GM12878 (cell line): ENCODE measurements at regions of chr19 and their contacts with region 1.

Region 1: DNA sequence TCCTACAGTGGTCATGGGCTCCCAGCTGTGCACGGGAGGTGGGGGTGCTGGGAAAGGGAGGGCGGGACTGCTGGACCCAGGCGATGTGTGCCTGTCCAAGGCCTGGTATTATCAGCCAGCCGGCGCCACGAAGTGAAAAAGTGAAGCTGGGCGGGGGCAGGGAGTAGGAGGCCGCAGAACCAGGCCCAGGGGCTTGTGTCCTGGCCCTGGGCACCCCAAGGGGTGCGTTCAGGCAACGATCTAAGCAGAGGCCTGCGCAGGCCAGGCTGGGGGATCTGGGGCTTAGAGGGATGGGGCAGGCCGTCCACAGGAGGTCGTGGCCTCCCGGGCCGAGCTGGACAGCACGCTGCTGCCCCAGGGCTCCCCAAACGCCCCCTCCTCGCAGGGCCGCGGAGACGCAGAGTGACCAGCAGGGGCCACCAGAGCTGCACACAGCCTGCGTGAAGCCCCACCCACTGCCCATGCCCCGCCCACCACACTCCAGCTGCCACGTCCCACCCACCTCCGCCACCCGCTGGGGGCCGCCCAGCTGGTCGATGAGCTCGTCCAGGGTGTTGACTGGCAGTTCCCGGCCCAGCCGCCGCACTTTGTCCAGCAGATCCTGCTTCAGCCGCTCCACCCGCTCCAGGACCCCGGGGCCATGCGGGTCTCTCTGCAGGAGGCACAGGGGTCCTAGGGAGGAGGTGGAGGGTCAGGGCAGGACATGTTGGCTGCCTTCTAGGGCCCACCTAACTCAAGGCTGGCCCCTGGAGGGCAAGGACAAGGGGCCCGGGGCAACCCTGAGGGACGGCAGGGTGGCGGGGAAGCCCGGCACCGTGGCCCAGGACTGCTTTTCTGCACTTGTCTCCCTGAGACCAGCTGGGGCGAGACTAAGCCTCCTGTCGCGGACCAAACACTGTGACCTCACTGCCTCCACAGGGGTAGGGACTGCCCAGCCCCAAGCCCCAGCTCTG is 9.5 kb downstream of the GPX4 start:
- DNase-seq: peak; percentile 24
- ATAC-seq: peak; percentile 93
- H3K4me3 ChIP-seq: no peak overlapping the region
- H3K27ac ChIP-seq: no peak overlapping the region
- H3K4me1 ChIP-seq: 0 out of 2 replicates have a peak, but pooled peaks cover 3% of the 10 kb centered on the region
- H3K27me3 ChIP-seq: no peaks in the 10 kb centered on the region
- CTCF ChIP-seq: peak; percentile 62 to 90 (median 90)
- EP300 ChIP-seq: no peak
- POLR2A ChIP-seq: peak; percentile 61
- RAD21 ChIP-seq: peak; percentile 69

Region 2: DNA sequence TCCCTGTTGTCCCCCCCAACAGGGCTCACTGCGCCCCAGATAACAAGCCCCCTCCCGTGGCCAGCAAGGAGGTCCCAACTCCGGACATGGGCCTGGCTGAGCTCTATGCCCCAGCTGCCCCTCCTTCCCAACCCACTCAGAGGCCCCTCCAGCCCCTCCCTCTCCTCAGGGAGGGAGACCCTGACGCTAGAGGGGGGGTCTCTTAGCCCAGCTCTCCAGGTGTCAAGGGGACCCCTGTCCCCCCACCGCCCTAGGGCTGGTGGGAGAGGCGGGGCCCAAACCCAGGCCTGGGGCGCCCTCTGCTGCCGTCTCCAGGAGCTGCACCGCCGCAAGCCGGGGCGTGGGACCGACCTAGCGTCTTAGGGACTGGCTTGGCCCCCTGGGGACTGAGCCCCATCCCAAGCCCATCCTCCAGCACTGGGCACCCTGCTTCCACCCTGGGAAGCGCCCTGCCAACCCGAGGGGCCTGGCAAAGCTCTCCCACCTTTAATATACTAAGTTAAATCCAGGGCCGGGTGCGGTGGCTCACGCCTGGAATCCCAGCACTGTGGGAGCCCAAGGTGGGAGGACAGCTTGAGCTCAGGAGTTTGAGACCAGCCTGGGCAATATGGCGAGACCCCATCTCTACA is 111.7 kb before region 1 on chr19:
- CTCF ChIA-PET with region 1: no interaction called
- POLR2A ChIA-PET with region 1: no interaction called
- RAD21 ChIA-PET with region 1: no interaction called
- SMC1A ChIA-PET with region 1: no interaction called
- in situ Hi-C with region 1: no loop called
- intact Hi-C with region 1: no loop called
- DNase-seq: no peak
- ATAC-seq: peak; percentile 92
- H3K4me3 ChIP-seq: no peak overlapping the region
- H3K27ac ChIP-seq: no peak overlapping the region
- H3K4me1 ChIP-seq: no peaks in the 10 kb centered on the region
- H3K27me3 ChIP-seq: peaks cover 3 to 5% of the 10 kb centered on the region in 2 experiments; a peak in 3 of 4 replicates
- CTCF ChIP-seq: peak; percentile 86 to 95 (median 95)
- EP300 ChIP-seq: no peak
- POLR2A ChIP-seq: no peak
- RAD21 ChIP-seq: peak; percentile 66

Region 3: GRCh38 chr19:1131738-1132551 is 18.6 kb after region 1 on chr19:
- CTCF ChIA-PET with region 1: interaction called, 9 read pairs
- POLR2A ChIA-PET with region 1: interaction called, 8 read pairs
- RAD21 ChIA-PET with region 1: interaction called, 11 read pairs
- SMC1A ChIA-PET with region 1: interaction called, 7 read pairs
- in situ Hi-C with region 1: no loop called
- intact Hi-C with region 1: no loop called
- DNase-seq: peak; percentile 21
- ATAC-seq: peak; percentile 76
- H3K4me3 ChIP-seq: peak overlapping the region; percentile 91
- H3K27ac ChIP-seq: peak overlapping the region; percentile 86
- H3K4me1 ChIP-seq: peaks cover 34% of the 10 kb centered on the region
- H3K27me3 ChIP-seq: no peaks in the 10 kb centered on the region
- CTCF ChIP-seq: no peak
- EP300 ChIP-seq: no peak; a peak in 1 of 4 replicates
- POLR2A ChIP-seq: peak; percentile 80
- RAD21 ChIP-seq: no peak

Region 4: DNA sequence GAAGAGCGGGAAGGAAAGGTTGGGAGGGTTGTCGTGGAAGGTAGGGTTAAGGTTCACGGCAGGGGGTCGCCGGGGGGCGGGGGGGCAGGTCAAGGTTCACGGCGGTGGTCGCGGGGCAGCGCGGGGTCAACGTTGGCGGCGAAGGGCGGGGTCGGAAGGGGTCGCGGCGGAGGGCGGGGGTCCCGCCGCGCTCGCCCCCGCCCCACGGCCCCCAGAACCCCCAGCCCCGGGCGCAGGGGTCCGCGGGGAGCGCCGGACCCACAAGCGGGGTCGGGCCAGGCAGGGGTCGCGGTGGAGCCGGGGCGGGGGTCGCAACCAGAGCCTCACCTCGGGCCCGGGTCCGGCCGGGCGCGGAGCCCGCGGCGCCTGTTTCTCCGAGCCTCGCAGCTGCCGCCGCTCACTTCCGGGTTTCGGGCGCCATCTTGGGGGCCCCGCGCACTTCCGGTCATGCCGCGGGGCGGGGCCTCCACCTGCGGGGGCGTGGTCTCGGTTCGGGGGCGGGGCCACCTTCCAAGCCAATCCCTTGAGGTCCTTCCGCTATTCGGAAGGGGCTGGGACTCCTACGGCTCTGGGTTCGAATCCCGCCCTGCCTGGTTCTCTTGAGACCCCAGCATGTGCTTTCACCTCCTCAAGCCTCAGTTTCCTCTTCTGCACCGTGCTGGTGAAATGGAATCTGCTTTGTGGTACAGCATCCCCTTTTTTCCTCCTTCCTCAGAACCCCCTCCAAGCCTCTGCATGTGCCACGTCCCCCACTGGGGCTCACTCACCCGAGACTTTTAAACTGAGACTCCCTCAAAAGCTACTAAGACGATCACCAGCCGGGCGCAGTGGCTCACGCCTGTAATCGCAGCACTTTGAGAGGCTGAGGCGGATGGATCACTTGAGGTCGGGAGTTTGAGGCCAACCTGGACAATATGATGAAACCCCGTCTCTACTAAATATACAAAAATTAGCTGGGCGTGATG is 60.8 kb after region 1 on chr19 and contains the start of gene SBNO2:
- CTCF ChIA-PET with region 1: interaction called, 13 read pairs
- POLR2A ChIA-PET with region 1: interaction called, 4 read pairs
- RAD21 ChIA-PET with region 1: interaction called, 9 read pairs
- SMC1A ChIA-PET with region 1: no interaction called
- in situ Hi-C with region 1: no loop called
- intact Hi-C with region 1: no loop called
- DNase-seq: no peak
- ATAC-seq: peak; percentile 82
- H3K4me3 ChIP-seq: peak within 1 kb of the TSS; percentile 95
- H3K27ac ChIP-seq: peak within 1 kb of the TSS; percentile 83
- H3K4me1 ChIP-seq: peaks cover 16% of the 10 kb centered on the region
- H3K27me3 ChIP-seq: no peaks in the 10 kb centered on the region
- CTCF ChIP-seq: no peak
- EP300 ChIP-seq: no peak
- POLR2A ChIP-seq: peak; percentile 92
- RAD21 ChIP-seq: no peak
- polyA plus RNA-seq, gene SBNO2: 0.08 to 0.15 TPM

Region 5: DNA sequence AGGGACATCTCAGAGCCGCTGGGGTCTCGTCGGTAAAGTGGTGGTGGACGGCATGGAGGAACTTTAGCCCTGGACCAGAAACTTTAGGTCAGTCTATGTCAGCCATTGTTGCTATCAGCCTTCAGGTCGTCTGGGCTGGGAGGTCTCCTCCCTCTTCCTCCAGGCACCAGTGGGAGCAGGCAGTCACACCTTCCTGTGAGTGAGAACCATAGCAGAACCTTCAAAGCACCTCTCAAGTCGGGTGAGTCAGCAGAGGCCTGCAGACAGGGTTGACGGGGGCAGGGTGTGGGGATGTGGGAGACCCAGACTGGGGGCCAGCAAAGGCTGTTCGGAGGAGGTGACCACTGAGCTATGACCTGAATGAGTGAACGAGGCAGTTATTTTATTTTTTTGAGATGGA is 76.1 kb after region 1 on chr19:
- CTCF ChIA-PET with region 1: interaction called, 49 read pairs
- POLR2A ChIA-PET with region 1: interaction called, 3 read pairs
- RAD21 ChIA-PET with region 1: interaction called, 38 read pairs
- SMC1A ChIA-PET with region 1: interaction called, 24 read pairs
- in situ Hi-C with region 1: no loop called
- intact Hi-C with region 1: loop called (anchors 5 kb)
- DNase-seq: no peak
- ATAC-seq: peak; percentile 59
- H3K4me3 ChIP-seq: no peak overlapping the region
- H3K27ac ChIP-seq: no peak overlapping the region
- H3K4me1 ChIP-seq: peaks cover 17% of the 10 kb centered on the region
- H3K27me3 ChIP-seq: no peaks in the 10 kb centered on the region
- CTCF ChIP-seq: no peak
- EP300 ChIP-seq: no peak
- POLR2A ChIP-seq: no peak
- RAD21 ChIP-seq: no peak

Region 6: DNA sequence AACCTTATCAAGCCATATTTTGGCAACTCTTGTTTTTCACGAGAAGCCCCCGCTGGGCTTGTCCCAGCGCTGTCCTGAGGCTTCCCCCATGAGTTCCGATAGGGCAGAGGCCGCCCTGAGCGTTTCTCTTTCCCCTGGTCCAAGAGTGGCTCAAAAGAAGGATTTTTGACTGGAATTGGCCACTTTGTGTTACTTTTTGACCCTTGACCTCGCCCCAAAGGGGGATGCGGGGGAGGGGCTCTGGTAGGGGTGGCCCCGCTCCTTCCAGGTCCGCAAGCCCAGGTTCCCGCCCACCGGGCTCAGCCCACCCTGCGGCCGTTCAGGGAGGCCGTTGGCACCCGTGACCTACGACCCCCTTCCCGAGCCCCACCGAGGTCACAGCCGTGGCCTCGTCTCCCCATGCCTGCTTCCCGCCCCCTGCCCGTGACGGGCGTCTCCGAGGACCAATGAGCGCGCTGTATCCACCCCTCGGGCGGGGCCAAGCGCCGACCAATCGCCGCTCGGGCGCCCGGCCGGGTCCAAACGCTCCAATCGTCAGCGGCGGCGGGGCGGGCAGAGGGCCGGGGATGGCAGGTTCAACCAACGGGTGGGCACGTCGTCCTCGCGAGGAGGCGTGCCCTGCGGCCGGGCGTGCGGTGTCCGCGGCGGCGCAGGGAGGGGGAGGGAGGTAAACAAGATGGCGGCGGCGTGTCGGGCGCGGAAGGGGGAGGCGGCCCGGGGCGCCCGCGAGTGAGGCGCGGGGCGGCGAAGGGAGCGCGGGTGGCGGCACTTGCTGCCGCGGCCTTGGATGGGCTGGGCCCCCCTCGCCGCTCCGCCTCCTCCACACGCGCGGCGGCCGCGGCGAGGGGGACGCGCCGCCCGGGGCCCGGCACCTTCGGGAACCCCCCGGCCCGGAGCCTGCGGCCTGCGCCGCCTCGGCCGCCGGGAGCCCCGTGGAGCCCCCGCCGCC is 92.1 kb after region 1 on chr19 and contains the start of gene STK11:
- CTCF ChIA-PET with region 1: interaction called, 12 read pairs
- POLR2A ChIA-PET with region 1: interaction called, 3 read pairs
- RAD21 ChIA-PET with region 1: interaction called, 17 read pairs
- SMC1A ChIA-PET with region 1: interaction called, 3 read pairs
- in situ Hi-C with region 1: loop called (anchors 5 kb)
- intact Hi-C with region 1: no loop called
- DNase-seq: peak; percentile 83
- ATAC-seq: peak; percentile 97
- H3K4me3 ChIP-seq: peak within 1 kb of the TSS; percentile 98
- H3K27ac ChIP-seq: peak within 1 kb of the TSS; percentile 66
- H3K4me1 ChIP-seq: peaks cover 17% of the 10 kb centered on the region
- H3K27me3 ChIP-seq: no peaks in the 10 kb centered on the region
- CTCF ChIP-seq: no peak
- EP300 ChIP-seq: no peak
- POLR2A ChIP-seq: peak; percentile 85
- RAD21 ChIP-seq: no peak
- polyA plus RNA-seq, gene STK11: 0.33 to 0.74 TPM

Region 7: DNA sequence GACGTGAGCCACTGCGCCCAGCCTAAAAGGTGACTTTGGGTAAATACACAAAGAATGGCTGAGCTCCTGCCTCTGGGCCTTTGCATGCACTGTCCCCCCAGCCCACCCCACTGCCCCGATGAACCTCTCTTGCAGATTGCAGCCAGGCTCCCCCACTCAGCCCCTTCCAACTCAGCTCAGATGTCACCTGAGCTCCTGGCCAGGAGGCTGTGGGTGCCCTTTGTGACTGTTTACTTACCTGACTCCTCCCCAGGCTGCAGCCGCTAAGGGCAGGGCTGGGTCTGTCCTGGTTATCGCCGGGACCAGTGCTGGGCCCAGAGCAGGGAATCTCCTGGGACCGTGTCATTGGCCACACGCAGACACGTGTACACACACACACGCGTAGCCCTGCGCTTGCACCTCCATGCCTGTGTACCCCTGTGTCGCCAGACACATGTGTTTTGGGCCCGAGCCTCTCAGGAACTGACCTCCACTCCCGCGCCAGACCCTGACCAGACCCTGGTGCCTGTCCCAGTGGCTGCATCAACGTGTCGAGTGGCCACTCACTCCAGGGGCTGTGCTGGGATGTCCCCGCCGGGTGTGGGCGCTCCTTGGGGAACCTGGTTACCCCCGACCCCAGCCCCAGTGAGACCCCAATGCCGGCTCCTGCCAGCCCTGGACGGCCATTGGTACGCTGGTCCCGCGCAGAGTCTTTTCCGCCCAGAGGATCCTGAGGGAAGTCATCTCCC is 191.1 kb after region 1 on chr19:
- CTCF ChIA-PET with region 1: no interaction called
- POLR2A ChIA-PET with region 1: no interaction called
- RAD21 ChIA-PET with region 1: no interaction called
- SMC1A ChIA-PET with region 1: no interaction called
- in situ Hi-C with region 1: no loop called
- intact Hi-C with region 1: no loop called
- DNase-seq: no peak
- ATAC-seq: no peak
- H3K4me3 ChIP-seq: no peak overlapping the region
- H3K27ac ChIP-seq: no peak overlapping the region
- H3K4me1 ChIP-seq: no peaks in the 10 kb centered on the region
- H3K27me3 ChIP-seq: no peaks in the 10 kb centered on the region
- CTCF ChIP-seq: no peak
- EP300 ChIP-seq: no peak
- POLR2A ChIP-seq: no peak
- RAD21 ChIP-seq: no peak